B cell (primary cell): ENCODE measurements at regions of chr9 and their contacts with region 1.

Region 1: GRCh38 chr9:21995177-21996086 is 841 bp downstream of the CDKN2B-AS1 start:
- DNase-seq: peak; percentile 96
- ATAC-seq: peak; percentile 78
- H3K4me3 ChIP-seq: peak overlapping the region; percentile 76 to 97 (median 86)
- H3K4me3 Mint-ChIP-seq: peak overlapping the region; percentile 97
- H3K27ac ChIP-seq: peak overlapping the region; percentile 87 to 94
- H3K27ac Mint-ChIP-seq: peak overlapping the region; percentile 95
- H3K4me1 ChIP-seq: peaks cover 18 to 19% of the 10 kb centered on the region in 2 donors
- H3K4me1 Mint-ChIP-seq: peaks cover 19% of the 10 kb centered on the region
- H3K27me3 ChIP-seq: peaks cover 0 to 11% (median 2%) of the 10 kb centered on the region in 4 experiments
- H3K27me3 Mint-ChIP-seq: no peaks in the 10 kb centered on the region
- CTCF ChIP-seq: peak; percentile 15

Region 2: GRCh38 chr9:20684035-20684872 is 1311.2 kb before region 1 on chr9 and contains the start of gene FOCAD:
- CTCF ChIA-PET with region 1: no interaction called
- POLR2A ChIA-PET with region 1: no interaction called
- intact Hi-C with region 1: loop called (anchors 10 kb)
- DNase-seq: peak; percentile 96
- ATAC-seq: peak; percentile 99
- H3K4me3 ChIP-seq: peak within 1 kb of the TSS; percentile 71 to 92 (median 83)
- H3K4me3 Mint-ChIP-seq: peak within 1 kb of the TSS; percentile 95
- H3K27ac ChIP-seq: peak within 1 kb of the TSS; percentile 20 to 70
- H3K27ac Mint-ChIP-seq: peak within 1 kb of the TSS; percentile 48
- H3K4me1 ChIP-seq: peaks cover 15 to 17% of the 10 kb centered on the region in 2 donors
- H3K4me1 Mint-ChIP-seq: peaks cover 17% of the 10 kb centered on the region
- H3K27me3 ChIP-seq: no peaks in the 10 kb centered on the region
- H3K27me3 Mint-ChIP-seq: no peaks in the 10 kb centered on the region
- CTCF ChIP-seq: no peak
- total RNA-seq, gene FOCAD: 10.1 and 13.8 TPM in 2 replicates

Region 3: DNA sequence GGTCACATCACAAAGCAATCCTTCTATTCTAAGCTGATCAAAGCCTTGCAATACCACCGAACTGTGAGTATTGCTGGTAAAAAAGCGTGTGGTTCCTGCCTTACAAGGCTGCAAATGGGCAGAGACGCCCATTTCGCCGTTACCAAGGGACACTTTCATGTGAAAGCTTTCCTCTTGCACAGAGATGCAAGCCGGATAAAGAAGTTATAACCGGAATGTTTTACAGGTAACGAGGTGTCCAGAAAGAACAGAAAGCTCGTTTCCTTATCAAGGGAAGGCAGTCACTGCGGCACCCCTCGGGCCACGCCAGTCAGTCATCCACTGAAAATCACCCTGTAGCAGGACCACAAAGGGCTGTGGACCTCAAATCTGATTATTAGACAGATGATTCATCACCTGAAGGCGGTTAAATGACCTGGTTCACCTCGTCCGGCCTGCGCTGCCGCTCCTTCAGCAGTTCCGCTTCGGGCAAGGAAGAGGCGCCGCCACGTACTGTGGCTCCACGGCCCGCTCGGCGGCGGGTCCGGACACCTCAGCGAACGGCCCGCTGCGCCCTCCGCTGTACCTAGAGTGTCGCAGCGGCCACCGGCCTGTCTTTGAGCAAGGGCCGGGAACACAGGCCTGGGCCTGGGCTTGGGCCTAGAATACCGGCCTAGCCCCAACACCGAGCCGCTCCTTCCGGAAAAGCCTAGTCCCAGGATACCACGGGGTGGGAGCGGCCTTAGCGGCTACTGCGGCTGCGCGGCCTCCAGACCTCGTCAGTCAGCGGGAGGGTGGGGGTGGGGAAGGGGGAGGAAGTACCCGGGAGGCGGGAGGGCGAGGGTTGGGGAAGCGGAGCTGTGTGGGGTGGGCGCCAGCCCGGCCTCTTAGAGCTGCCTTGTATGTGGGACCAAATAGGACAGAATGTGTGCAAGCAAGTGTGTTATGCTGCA is 660.5 kb before region 1 on chr9 and contains the start of gene KLHL9:
- CTCF ChIA-PET with region 1: no interaction called
- POLR2A ChIA-PET with region 1: no interaction called
- intact Hi-C with region 1: loop called (anchors 10 kb)
- DNase-seq: peak; percentile 93
- ATAC-seq: peak; percentile 89
- H3K4me3 ChIP-seq: peak within 1 kb of the TSS; percentile 83 to 97 (median 89)
- H3K4me3 Mint-ChIP-seq: peak within 1 kb of the TSS; percentile 95
- H3K27ac ChIP-seq: peak within 1 kb of the TSS; percentile 90
- H3K27ac Mint-ChIP-seq: peak within 1 kb of the TSS; percentile 92
- H3K4me1 ChIP-seq: peaks cover 18 to 27% of the 10 kb centered on the region in 2 donors
- H3K4me1 Mint-ChIP-seq: peaks cover 49% of the 10 kb centered on the region
- H3K27me3 ChIP-seq: peaks cover 0 to 6% (median under 1%) of the 10 kb centered on the region in 4 experiments
- H3K27me3 Mint-ChIP-seq: peaks cover 12% of the 10 kb centered on the region
- CTCF ChIP-seq: no peak
- total RNA-seq, gene KLHL9: 17.5 and 17.6 TPM in 2 replicates

Region 4: GRCh38 chr9:21443849-21444625 is 551.4 kb before region 1 on chr9:
- CTCF ChIA-PET with region 1: no interaction called
- POLR2A ChIA-PET with region 1: no interaction called
- intact Hi-C with region 1: loop called (anchors 10 kb)
- DNase-seq: peak; percentile 88
- ATAC-seq: peak; percentile 92
- H3K4me3 ChIP-seq: no peak overlapping the region
- H3K4me3 Mint-ChIP-seq: peak overlapping the region; percentile 27
- H3K27ac ChIP-seq: peak overlapping the region in 1 of 2 donors; percentile 53
- H3K27ac Mint-ChIP-seq: peak overlapping the region; percentile 5
- H3K4me1 ChIP-seq: peaks cover 12 to 14% of the 10 kb centered on the region in 2 donors
- H3K4me1 Mint-ChIP-seq: peaks cover 13% of the 10 kb centered on the region
- H3K27me3 ChIP-seq: peaks cover 0 to 12% (median 3%) of the 10 kb centered on the region in 4 experiments
- H3K27me3 Mint-ChIP-seq: peaks cover 17% of the 10 kb centered on the region
- CTCF ChIP-seq: no peak

Region 5: DNA sequence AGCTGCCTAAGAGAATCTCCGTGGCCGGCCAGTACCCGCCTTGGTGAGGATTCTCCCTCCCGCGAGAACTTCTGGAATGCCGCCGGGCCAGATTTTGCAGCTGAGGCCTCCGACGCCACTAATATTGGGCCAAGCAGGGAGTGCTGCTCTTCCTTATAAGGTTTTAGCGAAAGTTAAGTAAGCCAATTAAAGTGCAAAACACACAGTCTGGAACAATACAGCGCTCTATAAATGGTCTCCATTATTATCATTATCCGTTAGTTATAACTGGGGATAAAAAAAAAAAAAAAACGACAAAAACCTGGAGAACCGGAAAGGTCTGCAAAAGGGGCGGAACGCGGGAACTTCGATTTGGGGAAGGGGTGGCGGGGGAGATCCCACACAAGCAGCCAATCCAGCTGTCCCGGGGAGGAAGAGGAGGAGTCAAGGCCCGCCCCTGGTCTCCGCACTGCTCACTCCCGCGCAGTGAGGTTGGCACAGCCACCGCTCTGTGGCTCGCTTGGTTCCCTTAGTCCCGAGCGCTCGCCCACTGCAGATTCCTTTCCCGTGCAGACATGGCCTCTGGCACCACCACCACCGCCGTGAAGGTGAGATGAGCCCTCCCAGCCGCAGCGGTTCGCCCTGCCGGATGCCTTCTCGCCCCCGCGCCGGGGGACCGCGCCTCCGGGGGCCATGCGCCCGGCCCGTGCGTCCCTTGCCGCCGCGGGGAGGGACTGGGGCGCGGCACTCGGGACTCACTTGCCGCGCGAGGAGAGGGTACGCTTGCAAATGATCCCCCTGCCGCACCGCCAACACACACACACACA is 193.0 kb before region 1 on chr9 and contains the start of gene MTAP:
- CTCF ChIA-PET with region 1: no interaction called
- POLR2A ChIA-PET with region 1: no interaction called
- intact Hi-C with region 1: loop called (anchors 1 kb)
- DNase-seq: peak; percentile 80
- ATAC-seq: peak; percentile 88
- H3K4me3 ChIP-seq: peak within 1 kb of the TSS; percentile 68 to 94 (median 84)
- H3K4me3 Mint-ChIP-seq: peak within 1 kb of the TSS; percentile 99
- H3K27ac ChIP-seq: peak within 1 kb of the TSS; percentile 24 to 71
- H3K27ac Mint-ChIP-seq: peak within 1 kb of the TSS; percentile 83
- H3K4me1 ChIP-seq: peaks cover 24 to 25% of the 10 kb centered on the region in 2 donors
- H3K4me1 Mint-ChIP-seq: peaks cover 48% of the 10 kb centered on the region
- H3K27me3 ChIP-seq: peaks cover 0 to 9% (median 2%) of the 10 kb centered on the region in 4 experiments
- H3K27me3 Mint-ChIP-seq: peaks cover 13% of the 10 kb centered on the region
- CTCF ChIP-seq: no peak
- total RNA-seq, gene MTAP: 28.8 and 38.4 TPM in 2 replicates

Region 6: GRCh38 chr9:21965401-21965951 is 30.0 kb before region 1 on chr9:
- CTCF ChIA-PET with region 1: interaction called, 12 read pairs
- POLR2A ChIA-PET with region 1: no interaction called
- intact Hi-C with region 1: loop called (anchors 1 kb)
- DNase-seq: peak; percentile 72
- ATAC-seq: peak; percentile 65
- H3K4me3 ChIP-seq: peak overlapping the region in 4 of 5 experiments; percentile 14 to 49 (median 27)
- H3K4me3 Mint-ChIP-seq: peak overlapping the region; percentile 76
- H3K27ac ChIP-seq: no peak overlapping the region
- H3K27ac Mint-ChIP-seq: no peak overlapping the region
- H3K4me1 ChIP-seq: peaks cover 17 to 34% of the 10 kb centered on the region in 2 donors
- H3K4me1 Mint-ChIP-seq: peaks cover 21% of the 10 kb centered on the region
- H3K27me3 ChIP-seq: peaks cover 0 to 83% (median 77%) of the 10 kb centered on the region in 4 experiments
- H3K27me3 Mint-ChIP-seq: peaks cover 89% of the 10 kb centered on the region
- CTCF ChIP-seq: peak; percentile 24

Region 7: GRCh38 chr9:22238809-22239684 is 243.6 kb after region 1 on chr9:
- CTCF ChIA-PET with region 1: interaction called, 5 read pairs
- POLR2A ChIA-PET with region 1: no interaction called
- intact Hi-C with region 1: loop called (anchors 1 kb)
- DNase-seq: peak; percentile 58
- ATAC-seq: no peak
- H3K4me3 ChIP-seq: no peak overlapping the region
- H3K4me3 Mint-ChIP-seq: no peak overlapping the region
- H3K27ac ChIP-seq: no peak overlapping the region
- H3K27ac Mint-ChIP-seq: peak overlapping the region; percentile 27
- H3K4me1 ChIP-seq: peaks cover 32 to 38% of the 10 kb centered on the region in 2 donors
- H3K4me1 Mint-ChIP-seq: peaks cover 56% of the 10 kb centered on the region
- H3K27me3 ChIP-seq: no peaks in the 10 kb centered on the region
- H3K27me3 Mint-ChIP-seq: no peaks in the 10 kb centered on the region
- CTCF ChIP-seq: peak; percentile 58